SK-N-SH (cell line): ENCODE measurements at regions of chr15 and their contacts with region 1.

Region 1: GRCh38 chr15:73633111-73633990 is at the start of gene NPTN:
- DNase-seq: peak; percentile 97
- H3K4me3 ChIP-seq: peak within 1 kb of the TSS; percentile 78 to 85
- H3K27ac ChIP-seq: peak within 1 kb of the TSS; percentile 82 to 98
- H3K4me1 ChIP-seq: peaks cover 28 to 29% of the 10 kb centered on the region in 2 experiments
- H3K27me3 ChIP-seq: no peaks in the 10 kb centered on the region
- CTCF ChIP-seq: 0 out of 2 replicates have a peak, but pooled peaks have one; percentile 14
- EP300 ChIP-seq: no peak
- RAD21 ChIP-seq: no peak
- polyA plus RNA-seq, gene NPTN: 177 and 183 TPM in 2 replicates

Region 2: DNA sequence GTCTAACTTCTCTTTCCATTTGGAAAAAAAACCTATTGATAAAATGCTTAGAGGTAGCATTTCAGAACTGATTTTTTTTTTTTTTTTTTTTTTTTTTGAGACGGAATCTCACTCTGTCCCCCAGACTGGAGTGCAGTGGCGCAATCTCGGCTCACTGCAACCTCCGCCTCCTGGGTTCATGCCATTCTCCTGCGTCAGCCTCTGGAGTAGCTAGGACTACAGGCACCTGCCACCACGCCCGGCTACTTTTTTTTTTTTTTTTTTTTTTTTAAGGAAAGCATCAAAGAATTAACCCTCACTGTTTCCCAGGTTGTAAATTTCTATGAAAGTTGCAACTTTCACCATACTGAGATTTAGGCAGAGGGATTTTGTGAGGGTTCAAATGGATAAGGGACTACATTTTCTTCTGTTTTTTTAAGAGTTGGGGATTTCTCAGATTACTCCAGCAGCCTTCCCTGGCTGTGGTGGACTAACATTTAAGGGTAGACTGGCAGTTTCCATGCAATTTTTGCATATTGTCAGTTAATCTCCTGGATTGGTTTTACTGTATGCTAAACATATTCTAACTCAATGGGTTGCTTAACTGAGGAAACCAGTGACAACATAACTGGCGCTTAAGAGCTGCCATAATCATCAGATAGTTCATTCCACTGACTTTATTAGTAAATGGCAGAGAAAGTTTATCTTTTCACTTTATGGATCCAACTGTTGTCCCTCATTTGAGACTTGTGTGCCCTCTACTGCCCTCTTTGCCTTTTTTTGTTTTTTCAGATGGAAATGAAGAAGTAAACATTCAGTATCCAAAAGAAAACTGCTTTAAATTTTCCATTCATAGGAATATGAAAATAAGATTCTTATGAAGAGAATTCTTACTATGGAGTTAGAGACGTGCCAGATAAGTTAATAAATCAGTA is 93.9 kb before region 1 on chr15:
- CTCF ChIA-PET with region 1: no interaction called
- POLR2A ChIA-PET with region 1: no interaction called
- DNase-seq: no peak
- H3K4me3 ChIP-seq: no peak overlapping the region
- H3K27ac ChIP-seq: no peak overlapping the region
- H3K4me1 ChIP-seq: no peaks in the 10 kb centered on the region
- H3K27me3 ChIP-seq: no peaks in the 10 kb centered on the region
- CTCF ChIP-seq: no peak; the same call in 1 of the 2 replicates
- EP300 ChIP-seq: no peak
- RAD21 ChIP-seq: peak; percentile 40; the same call in 1 of the 2 replicates

Region 3: GRCh38 chr15:73560501-73561117 is 72.7 kb before region 1 on chr15:
- CTCF ChIA-PET with region 1: interaction called, 145 read pairs
- POLR2A ChIA-PET with region 1: interaction called, 3 read pairs
- DNase-seq: peak; percentile 42
- H3K4me3 ChIP-seq: no peak overlapping the region
- H3K27ac ChIP-seq: no peak overlapping the region
- H3K4me1 ChIP-seq: peaks cover 0 to 2% of the 10 kb centered on the region in 2 experiments; a peak in 2 of 4 replicates
- H3K27me3 ChIP-seq: no peaks in the 10 kb centered on the region
- CTCF ChIP-seq: peak; percentile 61
- EP300 ChIP-seq: no peak
- RAD21 ChIP-seq: peak; percentile 81

Region 4: DNA sequence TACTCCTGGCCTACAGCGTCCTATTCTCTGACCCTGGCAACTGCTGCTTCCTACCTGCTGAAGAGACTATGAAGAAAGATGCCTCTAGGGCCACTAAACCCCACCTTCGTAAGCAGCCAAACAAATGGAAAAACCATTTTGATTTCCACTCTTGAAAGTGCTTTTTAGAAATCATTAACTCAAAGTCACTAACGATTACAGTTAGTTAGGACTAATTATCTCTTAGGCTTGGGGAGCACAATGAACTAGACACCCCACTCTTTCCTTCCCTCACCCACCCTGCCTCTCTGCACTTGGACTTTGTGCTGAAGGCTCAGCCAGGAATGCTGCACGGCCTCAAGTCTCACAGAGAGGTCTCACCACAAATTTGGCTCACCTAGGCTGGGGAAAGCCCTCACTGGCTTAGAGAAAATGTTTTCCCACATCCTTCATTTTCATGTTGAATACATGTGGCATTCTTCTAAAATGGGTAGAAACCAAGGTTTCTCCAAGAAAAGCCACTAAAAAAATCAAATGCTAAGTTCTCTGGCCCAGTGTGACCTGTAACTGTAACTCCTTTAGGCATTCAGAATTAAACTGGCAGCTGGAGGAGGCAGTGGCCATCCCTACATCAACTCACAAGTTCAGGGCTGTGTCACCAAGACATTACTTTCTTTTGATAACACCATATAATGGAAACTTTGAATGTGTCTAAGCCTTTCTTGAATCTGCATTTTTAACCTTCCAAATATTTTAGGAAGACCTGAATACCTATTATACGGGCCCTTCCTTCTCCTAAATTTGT is 47.3 kb before region 1 on chr15:
- CTCF ChIA-PET with region 1: interaction called, 19 read pairs
- POLR2A ChIA-PET with region 1: no interaction called
- DNase-seq: no peak
- H3K4me3 ChIP-seq: no peak overlapping the region
- H3K27ac ChIP-seq: no peak overlapping the region
- H3K4me1 ChIP-seq: no peaks in the 10 kb centered on the region; a peak in 1 of 4 replicates
- H3K27me3 ChIP-seq: no peaks in the 10 kb centered on the region
- CTCF ChIP-seq: no peak
- EP300 ChIP-seq: no peak
- RAD21 ChIP-seq: no peak

Region 5: DNA sequence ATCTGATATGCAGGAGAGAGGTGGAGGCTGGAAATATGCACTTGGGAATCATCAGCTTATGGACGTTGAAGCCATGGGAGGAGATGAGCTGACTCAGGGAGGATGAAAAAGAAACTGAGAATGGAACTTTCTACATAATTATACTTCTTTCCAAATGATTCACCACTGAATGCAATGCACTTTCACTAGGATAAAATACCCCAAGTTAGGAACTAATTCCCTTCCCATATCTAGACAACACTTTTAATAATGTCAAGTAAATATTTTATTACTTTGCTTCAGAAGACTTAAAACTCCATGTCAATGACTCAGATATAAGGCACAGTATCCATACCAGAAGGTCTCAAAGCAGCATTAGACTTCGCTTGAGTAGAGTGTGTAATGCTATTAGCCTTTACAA is 24.4 kb before region 1 on chr15:
- CTCF ChIA-PET with region 1: interaction called, 16 read pairs
- POLR2A ChIA-PET with region 1: no interaction called
- DNase-seq: no peak
- H3K4me3 ChIP-seq: no peak overlapping the region
- H3K27ac ChIP-seq: peak overlapping the region in 1 of 2 experiments; percentile 73; a peak in 2 of 4 replicates
- H3K4me1 ChIP-seq: peaks cover 0 to 10% of the 10 kb centered on the region in 2 experiments; a peak in 2 of 4 replicates
- H3K27me3 ChIP-seq: no peaks in the 10 kb centered on the region
- CTCF ChIP-seq: no peak
- EP300 ChIP-seq: no peak
- RAD21 ChIP-seq: no peak

Region 6: DNA sequence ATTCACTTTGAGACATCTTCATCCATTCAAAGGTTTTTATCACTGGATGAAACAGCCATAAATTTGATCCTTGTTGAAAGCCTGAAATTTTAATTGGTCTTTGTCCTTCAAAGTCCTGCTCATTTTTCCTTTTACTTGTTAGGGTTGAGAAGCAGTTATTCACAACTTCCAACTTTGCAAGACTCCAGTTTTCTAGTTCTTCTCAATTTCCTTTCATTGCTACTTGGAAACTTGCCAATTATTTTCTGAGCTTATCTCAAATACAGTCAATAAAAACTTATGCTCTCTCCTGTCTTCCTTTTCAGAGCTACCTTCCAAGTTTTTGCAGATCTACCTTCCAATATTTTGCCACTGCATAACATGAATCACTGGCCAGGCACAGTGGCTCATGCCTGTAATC is 27.1 kb after region 1 on chr15:
- CTCF ChIA-PET with region 1: interaction called, 17 read pairs
- POLR2A ChIA-PET with region 1: no interaction called
- DNase-seq: no peak
- H3K4me3 ChIP-seq: no peak overlapping the region
- H3K27ac ChIP-seq: no peak overlapping the region
- H3K4me1 ChIP-seq: no peaks in the 10 kb centered on the region
- H3K27me3 ChIP-seq: peaks cover 2% of the 10 kb centered on the region; the same call in 1 of the 2 replicates
- CTCF ChIP-seq: no peak
- EP300 ChIP-seq: no peak
- RAD21 ChIP-seq: no peak

Region 7: GRCh38 chr15:73691396-73691795 is 58.0 kb after region 1 on chr15:
- CTCF ChIA-PET with region 1: interaction called, 256 read pairs
- POLR2A ChIA-PET with region 1: no interaction called
- DNase-seq: no peak
- H3K4me3 ChIP-seq: no peak overlapping the region
- H3K27ac ChIP-seq: no peak overlapping the region
- H3K4me1 ChIP-seq: peaks cover 23 to 39% of the 10 kb centered on the region in 2 experiments; a peak in 3 of 4 replicates
- H3K27me3 ChIP-seq: no peaks in the 10 kb centered on the region
- CTCF ChIP-seq: no peak
- EP300 ChIP-seq: no peak
- RAD21 ChIP-seq: peak; percentile 24

Region 8: GRCh38 chr15:73908030-73908821 is 274.9 kb after region 1 on chr15:
- CTCF ChIA-PET with region 1: interaction called, 13 read pairs
- POLR2A ChIA-PET with region 1: no interaction called
- DNase-seq: peak; percentile 86
- H3K4me3 ChIP-seq: no peak overlapping the region; a peak in 1 of 4 replicates
- H3K27ac ChIP-seq: no peak overlapping the region
- H3K4me1 ChIP-seq: peaks cover 0 to 2% of the 10 kb centered on the region in 2 experiments; a peak in 1 of 4 replicates
- H3K27me3 ChIP-seq: no peaks in the 10 kb centered on the region
- CTCF ChIP-seq: peak; percentile 90
- EP300 ChIP-seq: no peak
- RAD21 ChIP-seq: peak; percentile 91

Region 9: DNA sequence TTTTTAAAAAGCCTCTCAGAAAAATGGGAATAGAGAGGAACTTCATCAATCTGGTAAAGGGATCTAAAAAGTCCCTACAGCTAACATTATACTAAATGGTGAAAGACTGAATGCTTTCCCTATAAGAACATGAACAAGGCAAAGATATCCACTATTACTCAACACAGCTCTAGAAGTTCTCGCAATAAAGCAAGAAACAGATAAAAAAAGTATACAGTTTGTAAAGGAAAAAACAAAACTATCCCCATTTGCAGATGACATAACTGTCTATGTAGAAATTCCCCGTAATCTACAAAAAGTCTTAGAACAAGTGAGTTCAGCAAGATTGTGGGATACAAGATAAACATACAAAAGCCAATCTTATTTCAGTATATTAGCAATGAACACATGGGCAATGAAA is 1047.1 kb after region 1 on chr15:
- CTCF ChIA-PET with region 1: no interaction called
- POLR2A ChIA-PET with region 1: no interaction called
- DNase-seq: no peak
- H3K4me3 ChIP-seq: no peak overlapping the region
- H3K27ac ChIP-seq: no peak overlapping the region
- H3K4me1 ChIP-seq: no peaks in the 10 kb centered on the region
- H3K27me3 ChIP-seq: no peaks in the 10 kb centered on the region
- CTCF ChIP-seq: no peak
- EP300 ChIP-seq: no peak
- RAD21 ChIP-seq: no peak